HCT116 (cell line): ENCODE measurements at regions of chr13 and their contacts with region 1.

Region 1: DNA sequence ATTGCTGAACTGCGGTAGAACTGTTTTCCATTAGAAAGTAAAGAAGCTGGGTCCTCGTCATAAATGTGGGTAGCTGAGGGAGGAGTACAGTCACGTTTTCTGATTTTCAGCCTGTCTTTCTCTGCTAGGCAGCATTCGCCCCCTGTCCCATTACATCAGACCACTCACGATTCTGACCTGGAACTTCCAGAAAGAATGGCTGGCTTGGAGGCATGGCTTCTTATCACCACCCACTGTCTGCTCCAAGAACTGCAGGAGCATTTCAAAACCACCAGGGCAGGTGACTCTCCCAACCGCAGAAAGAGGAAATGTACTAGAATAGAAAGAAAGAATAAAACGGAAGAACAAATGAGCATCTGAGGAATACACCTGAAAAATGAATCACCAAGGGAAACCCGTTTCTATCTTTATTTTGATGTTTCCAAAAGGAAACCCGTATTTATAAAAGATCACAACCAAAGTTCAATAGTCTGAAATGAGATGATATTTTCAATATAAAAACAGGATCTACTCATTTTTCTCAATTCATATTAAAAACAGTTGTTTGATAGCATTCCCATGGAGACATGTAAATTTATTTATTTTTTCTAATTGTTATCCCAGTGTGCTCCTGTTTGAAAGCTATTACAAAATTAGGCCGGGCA is 22.1 kb upstream of the POMP start:
- DNase-seq: peak; percentile 52
- ATAC-seq: peak; percentile 97
- H3K4me3 ChIP-seq: no peak overlapping the region
- H3K27ac ChIP-seq: no peak overlapping the region
- H3K4me1 ChIP-seq: peaks cover 0 to 7% of the 10 kb centered on the region in 2 experiments; a peak in 2 of 4 replicates
- H3K27me3 ChIP-seq: no peaks in the 10 kb centered on the region
- CTCF ChIP-seq: peak; percentile 60 to 91 (median 83); a peak in 5 of 6 replicates
- POLR2A ChIP-seq: no peak
- RAD21 ChIP-seq: peak; percentile 86

Region 2: GRCh38 chr13:28058866-28059624 is 577.8 kb before region 1 on chr13:
- CTCF ChIA-PET with region 1: no interaction called
- POLR2A ChIA-PET with region 1: no interaction called
- RAD21 ChIA-PET with region 1: no interaction called
- intact Hi-C with region 1: loop called (anchors 2 kb)
- DNase-seq: peak; percentile 43
- ATAC-seq: peak; percentile 88
- H3K4me3 ChIP-seq: no peak overlapping the region
- H3K27ac ChIP-seq: no peak overlapping the region
- H3K4me1 ChIP-seq: no peaks in the 10 kb centered on the region
- H3K27me3 ChIP-seq: no peaks in the 10 kb centered on the region
- CTCF ChIP-seq: peak; percentile 46 to 82 (median 74); a peak in 5 of 6 replicates
- POLR2A ChIP-seq: no peak
- RAD21 ChIP-seq: peak; percentile 65

Region 3: DNA sequence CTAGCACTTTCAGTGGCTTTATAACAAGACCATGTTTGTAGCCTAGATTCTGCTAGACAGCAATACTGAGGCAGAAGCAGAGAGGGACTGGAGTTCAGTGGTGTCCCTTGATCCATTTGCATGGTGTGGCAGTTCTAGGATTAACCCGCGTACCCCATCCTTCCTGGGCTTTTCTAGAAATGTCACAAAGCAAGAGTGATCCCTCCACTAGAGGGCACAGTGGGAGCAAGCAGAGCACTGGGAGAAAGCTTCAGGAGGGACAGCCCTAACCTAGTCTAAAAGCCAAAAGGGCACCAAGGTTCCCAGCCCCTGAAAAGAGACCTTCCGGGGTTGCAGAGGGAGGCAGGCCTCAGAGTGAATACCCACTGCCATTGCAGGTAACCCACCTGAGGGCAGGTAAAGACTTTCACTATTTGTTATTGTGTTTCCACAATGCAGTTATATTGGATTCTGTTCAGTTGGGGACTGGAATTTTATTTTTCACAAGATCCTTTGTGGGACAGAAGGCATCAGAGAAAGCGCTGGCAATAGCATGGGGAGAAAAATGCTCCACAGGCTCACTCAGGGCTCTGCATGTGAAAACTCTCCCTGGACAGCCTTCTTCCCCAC is 312.5 kb before region 1 on chr13:
- CTCF ChIA-PET with region 1: interaction called, 4 read pairs
- POLR2A ChIA-PET with region 1: no interaction called
- RAD21 ChIA-PET with region 1: no interaction called
- intact Hi-C with region 1: loop called (anchors 1 kb)
- DNase-seq: peak; percentile 60
- ATAC-seq: peak; percentile 95
- H3K4me3 ChIP-seq: no peak overlapping the region
- H3K27ac ChIP-seq: no peak overlapping the region
- H3K4me1 ChIP-seq: no peaks in the 10 kb centered on the region
- H3K27me3 ChIP-seq: no peaks in the 10 kb centered on the region
- CTCF ChIP-seq: peak; percentile 57 to 86 (median 81); a peak in 5 of 6 replicates
- POLR2A ChIP-seq: no peak
- RAD21 ChIP-seq: peak; percentile 79

Region 4: DNA sequence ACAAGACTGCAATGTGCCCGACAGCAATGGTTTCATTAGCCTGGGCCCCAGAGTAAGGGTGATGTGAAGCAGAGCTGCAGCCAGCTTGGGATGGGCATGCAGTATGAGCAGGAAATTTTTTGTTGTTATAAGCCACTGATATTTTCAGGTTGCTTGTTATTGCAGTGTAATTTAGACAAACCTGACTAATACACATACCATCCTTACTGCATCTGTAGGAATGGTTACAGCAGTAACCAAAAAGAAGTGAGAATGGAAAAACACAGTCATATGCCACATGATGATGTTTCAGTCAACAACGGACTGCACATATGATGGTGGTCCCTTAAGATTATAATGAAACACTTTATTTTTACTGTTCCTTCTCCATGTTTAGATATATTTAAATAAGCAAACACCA is 13.5 kb after region 1 on chr13:
- CTCF ChIA-PET with region 1: no interaction called
- POLR2A ChIA-PET with region 1: no interaction called
- RAD21 ChIA-PET with region 1: no interaction called
- intact Hi-C with region 1: no loop called
- DNase-seq: no peak
- ATAC-seq: no peak
- H3K4me3 ChIP-seq: no peak overlapping the region
- H3K27ac ChIP-seq: no peak overlapping the region
- H3K4me1 ChIP-seq: peaks cover 0 to 7% of the 10 kb centered on the region in 2 experiments; a peak in 1 of 4 replicates
- H3K27me3 ChIP-seq: no peaks in the 10 kb centered on the region
- CTCF ChIP-seq: no peak
- POLR2A ChIP-seq: no peak
- RAD21 ChIP-seq: no peak